ENCODE measurements at regions of chr5 and their contacts with region 1.

Region 1: DNA sequence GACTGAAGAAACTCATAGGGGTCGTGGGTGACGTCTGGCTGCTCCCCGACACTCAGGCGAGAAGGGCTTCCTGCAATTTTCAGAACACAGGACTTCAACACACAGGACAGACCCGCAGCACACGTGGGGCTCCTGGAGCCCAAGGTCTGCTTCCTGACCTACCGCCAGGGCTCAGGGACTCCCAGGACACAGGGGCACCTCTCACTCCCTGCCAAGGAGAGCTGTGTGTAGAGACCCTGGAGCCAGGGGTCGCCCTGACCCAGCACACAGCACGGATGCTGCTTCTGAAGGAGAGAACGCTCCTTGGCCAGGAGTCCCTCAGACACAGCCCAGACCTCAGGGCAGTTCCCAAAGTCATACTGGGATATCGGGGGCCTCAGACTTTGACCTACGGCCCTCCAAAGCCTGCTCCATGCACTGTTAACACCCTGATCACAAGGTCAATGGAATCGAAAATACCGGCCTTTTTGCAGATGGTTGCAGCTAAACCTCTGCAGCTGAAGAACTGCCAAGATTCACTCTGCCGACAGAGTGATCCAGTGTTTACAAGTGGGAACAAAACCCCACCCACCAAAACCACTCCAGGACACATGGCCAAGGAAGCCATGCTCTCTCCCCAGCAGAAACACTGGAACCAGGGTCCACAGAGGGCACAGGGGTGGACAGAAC is 13.8 kb upstream of the ZDHHC11 start:
- DNase-seq: no peak
- H3K4me3 ChIP-seq: no peak overlapping the region
- H3K27ac ChIP-seq: no peak overlapping the region
- H3K4me1 ChIP-seq: no peaks in the 10 kb centered on the region
- H3K27me3 ChIP-seq: no peaks in the 10 kb centered on the region
- CTCF ChIP-seq: no peak
- POLR2A ChIP-seq: no peak

Region 2: DNA sequence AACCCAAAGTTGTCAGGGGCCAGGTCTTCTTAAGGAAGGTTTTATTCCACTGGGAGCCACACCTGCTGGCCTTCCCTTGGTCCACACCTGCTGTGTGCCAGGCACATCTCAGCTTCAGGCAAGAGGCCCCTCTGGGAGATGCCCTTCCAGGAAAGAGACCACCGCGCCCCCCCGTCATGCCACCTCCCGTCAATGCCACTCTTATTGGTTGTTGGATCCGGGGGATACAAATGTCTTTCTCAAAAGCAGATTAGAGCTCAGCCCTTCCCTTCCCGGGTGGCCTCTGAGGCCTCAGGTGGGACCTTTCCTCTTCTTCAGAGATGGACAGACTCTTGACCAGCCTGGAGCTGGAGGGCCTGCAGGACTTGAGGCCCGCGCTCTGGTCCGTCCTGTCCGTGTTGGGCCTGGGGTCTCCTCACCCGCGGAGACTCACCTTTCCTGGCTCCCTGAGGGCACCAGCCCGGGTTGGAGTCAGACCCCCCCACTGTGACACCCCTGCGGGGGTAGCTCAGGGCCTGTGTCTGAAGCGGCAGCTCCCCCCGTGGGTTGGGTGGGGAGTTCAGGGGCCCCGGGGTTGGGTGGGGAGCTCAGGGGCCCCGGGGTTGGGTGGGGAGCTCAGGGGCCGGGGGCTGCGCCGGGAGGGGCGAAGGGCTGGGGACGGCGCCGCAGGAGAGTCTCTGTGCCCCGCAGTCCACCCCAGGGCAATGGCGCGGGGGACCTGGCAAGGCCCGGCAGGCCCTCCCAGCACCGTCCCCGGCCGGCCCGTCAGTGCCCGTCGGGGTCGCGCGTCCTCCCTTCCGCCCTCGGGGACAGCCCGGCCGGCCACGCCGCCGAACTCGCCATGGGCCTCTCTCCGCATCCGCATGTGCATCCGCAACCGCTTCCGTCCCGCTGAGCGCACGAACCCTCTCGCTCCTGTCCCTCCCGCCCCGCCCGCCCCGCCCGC is 336.7 kb before region 1 on chr5:
- intact Hi-C with region 1: no loop called
- DNase-seq: no peak
- H3K4me3 ChIP-seq: no peak overlapping the region
- H3K27ac ChIP-seq: no peak overlapping the region
- H3K4me1 ChIP-seq: peaks cover 0 to 13% of the 10 kb centered on the region in 2 donors
- H3K27me3 ChIP-seq: peaks cover 82% of the 10 kb centered on the region
- CTCF ChIP-seq: no peak
- POLR2A ChIP-seq: no peak

Region 3: GRCh38 chr5:671459-672328 is 192.9 kb before region 1 on chr5:
- intact Hi-C with region 1: no loop called
- DNase-seq: peak; percentile 57 to 84 (median 72)
- H3K4me3 ChIP-seq: no peak overlapping the region
- H3K27ac ChIP-seq: no peak overlapping the region
- H3K4me1 ChIP-seq: peaks cover 0 to 26% of the 10 kb centered on the region in 2 donors
- H3K27me3 ChIP-seq: no peaks in the 10 kb centered on the region
- CTCF ChIP-seq: peak; percentile 71 to 92 (median 88)
- POLR2A ChIP-seq: peak in 1 of 2 donors; percentile 6

Region 4: GRCh38 chr5:819078-819477 is 45.6 kb before region 1 on chr5:
- intact Hi-C with region 1: loop called in 1 of 2 experiments (anchors 1 kb)
- DNase-seq: no peak
- H3K4me3 ChIP-seq: no peak overlapping the region
- H3K27ac ChIP-seq: no peak overlapping the region
- H3K4me1 ChIP-seq: no peaks in the 10 kb centered on the region
- H3K27me3 ChIP-seq: no peaks in the 10 kb centered on the region
- CTCF ChIP-seq: no peak
- POLR2A ChIP-seq: no peak